A673 (cell line): ENCODE measurements at regions of chrX and their contacts with region 1.

Region 1: GRCh38 chrX:109485470-109486340 is 3.8 kb upstream of the GUCY2F start:
- DNase-seq: peak; percentile 80
- H3K4me3 ChIP-seq: no peak overlapping the region
- H3K27ac ChIP-seq: no peak overlapping the region
- H3K4me1 ChIP-seq: no peaks in the 10 kb centered on the region
- H3K27me3 ChIP-seq: no peaks in the 10 kb centered on the region
- CTCF ChIP-seq: peak; percentile 99

Region 2: DNA sequence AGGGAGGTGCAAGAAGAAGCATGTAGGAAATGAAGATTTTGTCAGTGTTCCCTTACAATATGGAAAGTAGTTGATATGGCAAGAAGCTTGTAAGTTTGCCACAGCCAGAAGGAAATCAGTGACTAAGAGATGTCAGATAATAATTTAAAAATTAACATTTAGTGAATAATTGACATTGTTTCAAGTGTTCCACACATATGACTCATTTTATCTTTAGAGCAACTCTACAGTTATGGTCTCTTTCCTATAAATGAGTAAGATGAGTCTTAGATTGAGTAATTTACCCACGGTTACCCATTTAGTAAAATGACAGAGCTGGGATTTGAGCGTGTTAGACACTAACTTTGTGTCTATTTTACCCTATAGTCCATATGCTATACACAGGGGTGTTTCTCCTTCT is 449.1 kb before region 1 on chrX:
- CTCF ChIA-PET with region 1: no interaction called
- POLR2A ChIA-PET with region 1: no interaction called
- intact Hi-C with region 1: no loop called
- DNase-seq: no peak
- H3K4me3 ChIP-seq: no peak overlapping the region
- H3K27ac ChIP-seq: no peak overlapping the region
- H3K4me1 ChIP-seq: no peaks in the 10 kb centered on the region
- H3K27me3 ChIP-seq: no peaks in the 10 kb centered on the region
- CTCF ChIP-seq: no peak

Region 3: DNA sequence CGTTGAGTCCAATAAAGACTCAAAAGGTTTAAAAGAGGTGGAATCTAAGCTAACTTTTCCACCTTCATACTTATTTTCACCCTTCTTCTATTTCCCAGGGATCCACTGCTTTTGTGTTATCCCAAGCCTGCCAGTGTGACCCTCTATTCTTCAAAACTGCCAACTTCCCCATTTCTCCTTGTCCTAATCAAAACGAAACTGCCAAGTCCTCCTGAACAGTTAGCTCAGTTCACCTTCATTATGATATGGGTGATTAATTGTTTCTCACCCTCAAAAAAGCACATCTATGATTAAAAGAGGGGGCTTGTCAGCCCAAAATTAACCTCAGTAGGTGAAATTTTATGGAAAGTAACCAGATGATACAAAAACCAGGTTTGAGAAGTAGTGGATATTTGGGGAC is 112.2 kb before region 1 on chrX:
- CTCF ChIA-PET with region 1: no interaction called
- POLR2A ChIA-PET with region 1: no interaction called
- intact Hi-C with region 1: no loop called
- DNase-seq: no peak
- H3K4me3 ChIP-seq: no peak overlapping the region
- H3K27ac ChIP-seq: no peak overlapping the region
- H3K4me1 ChIP-seq: no peaks in the 10 kb centered on the region
- H3K27me3 ChIP-seq: no peaks in the 10 kb centered on the region
- CTCF ChIP-seq: no peak

Region 4: GRCh38 chrX:109536439-109537336 is 51.0 kb after region 1 on chrX and contains the start of gene NXT2:
- CTCF ChIA-PET with region 1: no interaction called
- POLR2A ChIA-PET with region 1: no interaction called
- intact Hi-C with region 1: no loop called
- DNase-seq: peak; percentile 92
- H3K4me3 ChIP-seq: peak within 1 kb of the TSS; percentile 54
- H3K27ac ChIP-seq: peak within 1 kb of the TSS; percentile 76
- H3K4me1 ChIP-seq: no peaks in the 10 kb centered on the region
- H3K27me3 ChIP-seq: no peaks in the 10 kb centered on the region
- CTCF ChIP-seq: no peak
- total RNA-seq, gene NXT2: 11.4 and 11.6 TPM in 2 replicates

Region 5: GRCh38 chrX:109635176-109635575 is 149.5 kb after region 1 on chrX:
- CTCF ChIA-PET with region 1: interaction called, 8 read pairs
- POLR2A ChIA-PET with region 1: no interaction called
- intact Hi-C with region 1: loop called (anchors 1 kb)
- DNase-seq: peak; percentile 48
- H3K4me3 ChIP-seq: no peak overlapping the region
- H3K27ac ChIP-seq: no peak overlapping the region
- H3K4me1 ChIP-seq: no peaks in the 10 kb centered on the region
- H3K27me3 ChIP-seq: no peaks in the 10 kb centered on the region
- CTCF ChIP-seq: peak; percentile 77

Region 6: DNA sequence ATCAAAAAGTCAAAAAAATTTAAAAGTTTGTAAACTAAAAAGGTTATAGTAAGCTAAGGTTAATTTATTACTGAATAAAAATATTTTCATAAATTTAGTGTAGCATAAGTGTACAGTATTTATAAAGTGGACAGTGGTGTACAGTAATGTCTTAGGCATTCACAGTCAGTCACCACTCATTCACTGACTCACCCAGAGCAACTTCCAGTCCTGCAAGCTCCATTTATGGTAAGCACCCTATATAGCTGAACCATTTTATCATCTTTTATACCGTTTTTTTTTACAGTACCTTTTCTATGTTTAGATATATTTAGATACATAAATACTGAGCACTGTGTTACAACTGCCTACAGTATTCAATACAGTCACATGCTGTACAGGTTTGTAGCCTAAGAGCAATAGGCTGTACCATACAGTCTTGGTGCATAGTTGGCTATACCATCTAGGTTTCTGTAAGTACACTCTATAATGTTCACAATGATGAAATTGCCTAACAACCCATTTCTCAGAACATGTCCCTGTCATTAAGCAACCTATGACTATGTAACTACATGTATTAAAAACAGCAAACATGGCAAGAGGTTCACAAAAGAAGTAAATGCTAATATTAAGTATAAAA is 228.7 kb after region 1 on chrX:
- CTCF ChIA-PET with region 1: no interaction called
- POLR2A ChIA-PET with region 1: no interaction called
- intact Hi-C with region 1: loop called (anchors 10 kb)
- DNase-seq: no peak
- H3K4me3 ChIP-seq: no peak overlapping the region
- H3K27ac ChIP-seq: no peak overlapping the region
- H3K4me1 ChIP-seq: peaks cover 8% of the 10 kb centered on the region
- H3K27me3 ChIP-seq: no peaks in the 10 kb centered on the region
- CTCF ChIP-seq: no peak

Region 7: DNA sequence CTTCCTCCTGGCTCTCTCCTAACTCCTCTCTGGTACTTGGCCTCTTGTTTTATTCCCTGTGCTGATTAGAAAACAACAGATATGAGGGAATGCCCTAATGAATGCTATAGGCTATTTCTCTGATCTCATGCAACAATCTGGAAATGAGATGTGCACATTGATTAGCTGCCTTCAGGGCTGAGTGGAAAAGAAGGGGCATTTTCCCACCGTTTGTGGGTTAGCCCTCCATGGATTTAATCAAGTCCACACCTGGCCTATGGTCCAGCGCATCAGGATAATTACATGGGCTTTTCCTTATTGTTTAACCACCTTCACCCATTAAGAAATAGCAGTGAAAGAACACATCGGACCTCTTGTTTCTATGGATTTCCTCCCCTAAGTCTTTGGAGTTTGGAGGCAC is 1714.6 kb after region 1 on chrX:
- CTCF ChIA-PET with region 1: no interaction called
- POLR2A ChIA-PET with region 1: no interaction called
- intact Hi-C with region 1: no loop called
- DNase-seq: no peak
- H3K4me3 ChIP-seq: no peak overlapping the region
- H3K27ac ChIP-seq: no peak overlapping the region
- H3K4me1 ChIP-seq: no peaks in the 10 kb centered on the region
- H3K27me3 ChIP-seq: peaks cover 44% of the 10 kb centered on the region
- CTCF ChIP-seq: no peak